ENCODE measurements at regions of chr6 and their contacts with region 1.

Region 1: GRCh38 chr6:117555882-117556498 is 46.3 kb downstream of the GOPC start:
- DNase-seq: peak; percentile 20 to 62 (median 46)
- ATAC-seq: peak; percentile 60
- H3K4me3 ChIP-seq: no peak overlapping the region
- H3K4me3 Mint-ChIP-seq: no peak overlapping the region
- H3K27ac ChIP-seq: no peak overlapping the region
- H3K27ac Mint-ChIP-seq: no peak overlapping the region
- H3K4me1 ChIP-seq: peaks cover 0 to under 1% of the 10 kb centered on the region in 2 donors
- H3K4me1 Mint-ChIP-seq: peaks cover under 1 to 3% (median 2%) of the 10 kb centered on the region in 7 donors
- H3K27me3 ChIP-seq: no peaks in the 10 kb centered on the region
- H3K27me3 Mint-ChIP-seq: peaks cover 0 to 2% (median 0%) of the 10 kb centered on the region in 5 donors

Region 2: DNA sequence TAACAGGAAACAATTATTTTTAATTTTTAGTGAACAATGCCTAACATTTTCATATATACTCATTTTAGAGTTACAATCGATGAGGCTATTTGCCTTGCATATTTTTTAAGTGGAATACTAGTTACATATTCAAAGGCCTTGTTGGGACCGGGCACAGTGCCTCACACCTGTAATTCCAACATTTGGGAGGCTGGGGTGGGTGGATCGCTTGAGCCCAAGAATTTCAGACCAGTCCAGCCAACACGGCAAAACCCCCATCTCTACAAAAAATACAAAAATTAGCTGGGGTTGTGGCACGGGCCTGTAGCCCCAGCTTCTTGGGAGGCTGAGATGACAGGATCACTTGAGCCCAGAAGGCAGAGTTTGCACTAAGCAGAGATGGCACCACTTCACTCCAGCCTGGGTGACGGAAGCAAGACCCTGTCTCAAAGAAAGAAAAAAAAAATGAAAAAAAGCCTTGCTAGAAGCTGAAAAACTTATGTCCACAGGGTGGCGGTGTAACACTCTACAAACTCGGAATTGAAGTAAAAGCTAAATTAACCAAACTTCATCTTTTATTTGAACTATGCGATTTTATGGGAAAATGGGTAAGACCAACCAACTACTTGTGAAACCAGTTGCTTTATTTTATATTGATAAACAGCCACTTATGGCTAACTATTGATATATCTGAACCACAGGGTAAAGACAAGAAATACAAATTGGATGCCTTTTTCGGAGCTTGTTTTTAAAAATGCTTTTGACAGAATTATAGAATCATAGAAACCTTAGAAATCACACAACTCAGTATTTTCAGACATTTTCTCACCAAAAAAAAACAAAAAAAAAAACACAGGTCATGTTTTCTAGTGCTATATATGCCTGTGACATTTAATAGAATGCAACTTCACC is 106.2 kb before region 1 on chr6:
- CTCF ChIA-PET with region 1: interaction called, 42 read pairs
- POLR2A ChIA-PET with region 1: interaction called, 3 read pairs
- intact Hi-C with region 1: loop called (anchors 1 kb)
- DNase-seq: peak; percentile 25 to 72 (median 60)
- ATAC-seq: peak; percentile 72
- H3K4me3 ChIP-seq: no peak overlapping the region
- H3K4me3 Mint-ChIP-seq: no peak overlapping the region
- H3K27ac ChIP-seq: no peak overlapping the region
- H3K27ac Mint-ChIP-seq: no peak overlapping the region
- H3K4me1 ChIP-seq: no peaks in the 10 kb centered on the region
- H3K4me1 Mint-ChIP-seq: peaks cover 0 to 5% (median 0%) of the 10 kb centered on the region in 7 donors
- H3K27me3 ChIP-seq: peaks cover 0 to 3% of the 10 kb centered on the region in 2 donors
- H3K27me3 Mint-ChIP-seq: peaks cover 19 to 73% (median 42%) of the 10 kb centered on the region in 5 donors

Region 3: DNA sequence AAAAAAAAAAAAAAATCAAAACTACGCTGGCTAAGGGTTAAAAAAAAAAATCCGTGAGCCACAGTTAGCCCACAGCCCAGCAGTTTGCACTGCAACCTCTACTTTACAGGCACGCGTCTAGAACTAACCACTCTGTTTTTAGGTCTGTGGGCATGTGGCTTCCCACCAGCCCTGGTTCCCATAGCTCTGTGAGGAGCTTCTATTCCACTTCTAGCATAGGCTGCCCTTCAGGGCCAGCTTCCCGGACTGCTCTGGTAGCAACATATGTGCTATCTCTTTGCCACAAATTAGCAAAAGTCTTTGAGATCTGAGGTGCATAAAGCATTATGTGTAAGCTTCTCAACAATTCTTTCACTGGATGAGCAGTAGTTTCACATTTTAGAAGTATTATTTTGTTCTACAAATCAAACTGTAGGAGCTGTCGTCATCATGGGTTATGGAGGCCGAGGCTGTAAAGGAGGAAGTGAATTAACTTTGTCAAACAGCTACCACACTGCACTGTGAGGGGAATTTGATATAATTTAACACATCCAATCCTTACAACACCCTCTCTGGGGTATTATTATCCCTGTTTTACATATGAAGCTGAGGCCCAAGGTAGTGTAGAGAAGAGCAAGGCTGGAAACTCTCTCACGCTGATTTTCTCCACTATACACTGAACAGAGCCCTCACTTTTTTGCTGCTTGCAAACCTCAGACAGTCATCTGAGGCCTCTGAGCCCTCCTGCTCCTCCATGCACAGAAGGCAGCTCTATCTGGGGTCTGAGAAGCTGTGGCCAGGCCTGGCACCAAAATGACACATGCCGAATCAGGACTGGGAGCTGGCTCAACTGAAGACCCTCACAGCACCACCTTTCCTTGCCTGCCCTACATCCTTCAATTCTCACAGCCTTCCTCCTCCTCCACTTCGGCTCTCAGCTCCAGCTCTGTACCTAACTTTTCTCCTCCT is 1758.2 kb after region 1 on chr6:
- CTCF ChIA-PET with region 1: no interaction called
- POLR2A ChIA-PET with region 1: no interaction called
- intact Hi-C with region 1: no loop called
- DNase-seq: peak in 7 of 9 donors; percentile 17 to 49 (median 38)
- ATAC-seq: peak; percentile 72
- H3K4me3 ChIP-seq: peak overlapping the region; percentile 22
- H3K4me3 Mint-ChIP-seq: peak overlapping the region; percentile 57 to 83 (median 73)
- H3K27ac ChIP-seq: peak overlapping the region; percentile 40
- H3K27ac Mint-ChIP-seq: peak overlapping the region; percentile 68 to 97 (median 85)
- H3K4me1 ChIP-seq: peaks cover 27 to 43% of the 10 kb centered on the region in 2 donors
- H3K4me1 Mint-ChIP-seq: peaks cover 27 to 69% (median 39%) of the 10 kb centered on the region in 7 donors
- H3K27me3 ChIP-seq: no peaks in the 10 kb centered on the region
- H3K27me3 Mint-ChIP-seq: no peaks in the 10 kb centered on the region

Measured in naive thymus-derived CD4-positive, alpha-beta T cell (primary cell).